ENCODE measurements at regions of chr3 and their contacts with region 1.

Region 1: DNA sequence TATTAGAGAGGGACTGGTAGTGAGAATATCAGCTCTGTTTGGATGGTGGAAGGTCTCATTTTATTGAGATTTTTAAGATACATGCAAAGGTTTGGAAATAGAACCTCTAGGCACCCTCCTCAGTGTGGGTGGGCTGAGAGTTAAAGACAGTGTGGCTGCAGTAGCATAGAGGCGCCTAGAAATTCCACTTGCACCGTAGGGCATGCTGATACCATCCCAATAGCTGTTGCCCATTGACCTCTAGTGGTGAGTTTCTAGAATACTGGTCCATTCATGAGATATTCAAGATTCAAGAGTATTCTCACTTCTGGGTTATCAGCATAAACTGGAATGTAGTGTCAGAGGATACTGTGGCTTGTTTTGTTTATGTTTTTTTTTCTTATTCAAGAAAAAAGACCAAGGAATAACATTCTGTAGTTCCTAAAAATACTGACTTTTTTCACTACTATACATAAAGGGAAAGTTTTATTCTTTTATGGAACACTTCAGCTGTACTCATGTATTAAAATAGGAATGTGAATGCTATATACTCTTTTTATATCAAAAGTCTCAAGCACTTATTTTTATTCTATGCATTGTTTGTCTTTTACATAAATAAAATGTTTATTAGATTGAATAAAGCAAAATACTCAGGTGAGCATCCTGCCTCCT is 87.2 kb downstream of the TGFBR2 start:
- DNase-seq: peak in 6 of 9 experiments; percentile 42 to 85 (median 61)
- ATAC-seq: peak; percentile 89
- H3K4me3 ChIP-seq: no peak overlapping the region
- H3K4me3 Mint-ChIP-seq: no peak overlapping the region
- H3K27ac ChIP-seq: peak overlapping the region in 1 of 2 experiments; percentile 4
- H3K27ac Mint-ChIP-seq: peak overlapping the region; percentile 72
- H3K4me1 ChIP-seq: peaks cover 57% of the 10 kb centered on the region
- H3K4me1 Mint-ChIP-seq: peaks cover 88% of the 10 kb centered on the region
- H3K27me3 ChIP-seq: no peaks in the 10 kb centered on the region
- H3K27me3 Mint-ChIP-seq: no peaks in the 10 kb centered on the region
- CTCF ChIP-seq: peak; percentile 87

Region 2: GRCh38 chr3:30161375-30161774 is 532.2 kb before region 1 on chr3:
- CTCF ChIA-PET with region 1: no interaction called
- POLR2A ChIA-PET with region 1: no interaction called
- intact Hi-C with region 1: no loop called
- DNase-seq: no peak
- ATAC-seq: no peak
- H3K4me3 ChIP-seq: no peak overlapping the region
- H3K4me3 Mint-ChIP-seq: no peak overlapping the region
- H3K27ac ChIP-seq: no peak overlapping the region
- H3K27ac Mint-ChIP-seq: no peak overlapping the region
- H3K4me1 ChIP-seq: no peaks in the 10 kb centered on the region
- H3K4me1 Mint-ChIP-seq: no peaks in the 10 kb centered on the region
- H3K27me3 ChIP-seq: no peaks in the 10 kb centered on the region
- H3K27me3 Mint-ChIP-seq: no peaks in the 10 kb centered on the region
- CTCF ChIP-seq: no peak

Region 3: GRCh38 chr3:30199096-30199759 is 494.4 kb before region 1 on chr3:
- CTCF ChIA-PET with region 1: interaction called, 35 read pairs
- POLR2A ChIA-PET with region 1: no interaction called
- intact Hi-C with region 1: loop called (anchors 1 to 5 kb)
- DNase-seq: peak; percentile 35 to 79 (median 65)
- ATAC-seq: peak; percentile 46
- H3K4me3 ChIP-seq: no peak overlapping the region
- H3K4me3 Mint-ChIP-seq: no peak overlapping the region
- H3K27ac ChIP-seq: no peak overlapping the region
- H3K27ac Mint-ChIP-seq: no peak overlapping the region
- H3K4me1 ChIP-seq: no peaks in the 10 kb centered on the region
- H3K4me1 Mint-ChIP-seq: no peaks in the 10 kb centered on the region
- H3K27me3 ChIP-seq: no peaks in the 10 kb centered on the region
- H3K27me3 Mint-ChIP-seq: no peaks in the 10 kb centered on the region
- CTCF ChIP-seq: peak; percentile 97

Region 4: DNA sequence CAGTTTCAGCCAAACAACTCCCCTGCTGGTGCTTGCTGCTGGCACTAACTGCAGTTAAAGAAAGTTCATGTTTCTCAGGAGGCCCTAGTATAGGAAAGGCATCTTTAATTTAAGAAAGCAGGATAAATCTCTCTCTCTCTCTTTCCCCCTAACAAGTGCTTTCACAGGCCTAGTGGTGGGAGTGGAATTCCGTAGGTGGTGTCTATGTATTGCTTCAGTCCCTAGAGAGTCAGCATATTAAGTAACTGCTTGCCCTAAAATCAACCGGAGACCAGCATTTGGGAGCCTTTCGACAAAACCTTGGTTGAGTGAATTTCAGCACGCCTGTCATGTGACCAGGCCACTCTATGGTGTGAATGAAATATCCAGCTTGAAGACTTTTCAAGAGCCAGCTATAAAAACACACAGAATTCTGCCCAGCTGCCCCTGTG is 256.4 kb before region 1 on chr3:
- CTCF ChIA-PET with region 1: interaction called, 3 read pairs
- POLR2A ChIA-PET with region 1: no interaction called
- intact Hi-C with region 1: loop called in 1 of 2 experiments (anchors 5 kb)
- DNase-seq: no peak
- ATAC-seq: no peak
- H3K4me3 ChIP-seq: no peak overlapping the region
- H3K4me3 Mint-ChIP-seq: no peak overlapping the region
- H3K27ac ChIP-seq: no peak overlapping the region
- H3K27ac Mint-ChIP-seq: no peak overlapping the region
- H3K4me1 ChIP-seq: peaks cover 22% of the 10 kb centered on the region
- H3K4me1 Mint-ChIP-seq: peaks cover 31% of the 10 kb centered on the region
- H3K27me3 ChIP-seq: no peaks in the 10 kb centered on the region
- H3K27me3 Mint-ChIP-seq: no peaks in the 10 kb centered on the region
- CTCF ChIP-seq: no peak

Region 5: GRCh38 chr3:30628901-30629590 is 64.5 kb before region 1 on chr3:
- CTCF ChIA-PET with region 1: interaction called, 21 read pairs
- POLR2A ChIA-PET with region 1: interaction called, 3 read pairs
- intact Hi-C with region 1: no loop called
- DNase-seq: peak in 2 of 9 experiments; percentile 57 to 76
- ATAC-seq: peak; percentile 9
- H3K4me3 ChIP-seq: peak overlapping the region in 1 of 2 experiments; percentile 19
- H3K4me3 Mint-ChIP-seq: peak overlapping the region; percentile 52
- H3K27ac ChIP-seq: peak overlapping the region; percentile 43 to 78
- H3K27ac Mint-ChIP-seq: peak overlapping the region; percentile 94
- H3K4me1 ChIP-seq: peaks cover 97% of the 10 kb centered on the region
- H3K4me1 Mint-ChIP-seq: peaks cover 92% of the 10 kb centered on the region
- H3K27me3 ChIP-seq: no peaks in the 10 kb centered on the region
- H3K27me3 Mint-ChIP-seq: no peaks in the 10 kb centered on the region
- CTCF ChIP-seq: peak; percentile 9

Region 6: DNA sequence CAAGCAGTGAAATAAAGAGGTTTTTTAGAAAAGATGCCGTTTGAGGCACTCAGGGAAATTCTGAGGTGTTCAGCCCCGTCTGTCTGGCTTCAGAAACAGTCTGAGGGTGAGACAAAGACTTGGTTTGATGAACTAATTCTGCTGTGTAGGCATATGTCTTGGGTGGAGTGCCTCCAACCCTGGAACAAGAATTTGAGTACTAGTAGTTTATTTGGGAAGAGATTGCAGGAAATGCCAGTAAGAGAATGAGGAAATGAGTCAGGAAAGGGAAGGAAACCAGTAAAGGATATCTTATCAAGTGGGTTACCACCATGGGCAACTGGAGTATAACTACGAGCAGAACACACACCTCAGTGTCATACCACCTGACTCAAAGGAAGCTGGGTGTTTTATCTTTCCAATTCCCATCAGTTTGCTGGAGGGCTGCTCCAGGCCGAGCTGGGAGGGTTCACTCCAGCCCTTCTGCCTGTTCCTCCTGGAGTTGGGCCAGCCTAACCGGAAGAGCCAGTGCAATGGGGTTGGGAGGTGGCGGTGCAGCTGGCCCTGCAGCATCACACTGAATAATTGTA is 11.9 kb before region 1 on chr3:
- CTCF ChIA-PET with region 1: interaction called, 23 read pairs
- POLR2A ChIA-PET with region 1: interaction called, 7 read pairs
- intact Hi-C with region 1: loop called in 1 of 2 experiments (anchors 1 kb)
- DNase-seq: peak in 1 of 9 experiments; percentile 46
- ATAC-seq: peak; percentile 41
- H3K4me3 ChIP-seq: no peak overlapping the region
- H3K4me3 Mint-ChIP-seq: peak overlapping the region; percentile 23
- H3K27ac ChIP-seq: peak overlapping the region in 1 of 2 experiments; percentile 32
- H3K27ac Mint-ChIP-seq: peak overlapping the region; percentile 92
- H3K4me1 ChIP-seq: peaks cover 87% of the 10 kb centered on the region
- H3K4me1 Mint-ChIP-seq: peaks cover 95% of the 10 kb centered on the region
- H3K27me3 ChIP-seq: no peaks in the 10 kb centered on the region
- H3K27me3 Mint-ChIP-seq: no peaks in the 10 kb centered on the region
- CTCF ChIP-seq: no peak

Region 7: GRCh38 chr3:30795176-30795575 is 101.6 kb after region 1 on chr3:
- CTCF ChIA-PET with region 1: no interaction called
- POLR2A ChIA-PET with region 1: no interaction called
- intact Hi-C with region 1: no loop called
- DNase-seq: no peak
- ATAC-seq: no peak
- H3K4me3 ChIP-seq: no peak overlapping the region
- H3K4me3 Mint-ChIP-seq: no peak overlapping the region
- H3K27ac ChIP-seq: no peak overlapping the region
- H3K27ac Mint-ChIP-seq: no peak overlapping the region
- H3K4me1 ChIP-seq: no peaks in the 10 kb centered on the region
- H3K4me1 Mint-ChIP-seq: no peaks in the 10 kb centered on the region
- H3K27me3 ChIP-seq: no peaks in the 10 kb centered on the region
- H3K27me3 Mint-ChIP-seq: peaks cover 7% of the 10 kb centered on the region
- CTCF ChIP-seq: no peak

Region 8: DNA sequence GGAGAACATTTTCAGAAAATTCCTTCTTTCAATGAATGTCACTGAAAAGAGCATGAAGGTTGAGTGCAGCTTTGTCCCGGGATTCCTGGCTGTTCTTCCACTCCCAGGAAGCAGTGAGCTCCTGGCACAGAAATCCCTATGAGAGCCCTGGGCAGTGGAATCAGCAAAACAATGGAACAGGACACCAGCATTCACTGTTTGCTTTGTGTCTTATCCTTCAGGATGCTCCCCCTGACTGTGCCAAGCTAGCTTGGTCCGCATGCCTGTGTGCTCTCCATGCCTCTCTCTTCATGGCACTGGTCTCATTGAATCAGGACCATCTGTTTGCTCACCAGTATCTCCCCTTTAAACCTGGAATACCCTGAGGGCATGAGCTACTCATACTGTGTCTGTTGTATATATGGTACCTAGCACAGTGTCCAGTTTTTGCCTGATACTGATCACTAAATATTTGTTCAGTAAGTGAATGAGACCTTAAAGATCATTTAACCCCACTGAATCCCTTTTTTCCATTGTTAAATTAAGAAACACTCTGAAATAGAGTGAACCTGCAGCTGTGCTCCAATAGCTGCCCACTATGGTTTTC is 303.0 kb after region 1 on chr3:
- CTCF ChIA-PET with region 1: no interaction called
- POLR2A ChIA-PET with region 1: no interaction called
- intact Hi-C with region 1: no loop called
- DNase-seq: no peak
- ATAC-seq: no peak
- H3K4me3 ChIP-seq: no peak overlapping the region
- H3K4me3 Mint-ChIP-seq: no peak overlapping the region
- H3K27ac ChIP-seq: no peak overlapping the region
- H3K27ac Mint-ChIP-seq: no peak overlapping the region
- H3K4me1 ChIP-seq: no peaks in the 10 kb centered on the region
- H3K4me1 Mint-ChIP-seq: no peaks in the 10 kb centered on the region
- H3K27me3 ChIP-seq: no peaks in the 10 kb centered on the region
- H3K27me3 Mint-ChIP-seq: no peaks in the 10 kb centered on the region
- CTCF ChIP-seq: no peak